Activated T-helper 1 cell treated with anti-CD3 and anti-CD28 coated beads, Interleukin-12 subunit alpha, Interleukin-12 subunit beta, Interleukin-2, Interleukin-4 antibody, amounts not matched to agents 30 ng/mL and 10 ng/mL and 1 ng/mL, durations not matched to agents 14 hours and 24 hours and 36 hours (primary cell): ENCODE measurements at regions of chr3 and their contacts with region 1.

Region 1: DNA sequence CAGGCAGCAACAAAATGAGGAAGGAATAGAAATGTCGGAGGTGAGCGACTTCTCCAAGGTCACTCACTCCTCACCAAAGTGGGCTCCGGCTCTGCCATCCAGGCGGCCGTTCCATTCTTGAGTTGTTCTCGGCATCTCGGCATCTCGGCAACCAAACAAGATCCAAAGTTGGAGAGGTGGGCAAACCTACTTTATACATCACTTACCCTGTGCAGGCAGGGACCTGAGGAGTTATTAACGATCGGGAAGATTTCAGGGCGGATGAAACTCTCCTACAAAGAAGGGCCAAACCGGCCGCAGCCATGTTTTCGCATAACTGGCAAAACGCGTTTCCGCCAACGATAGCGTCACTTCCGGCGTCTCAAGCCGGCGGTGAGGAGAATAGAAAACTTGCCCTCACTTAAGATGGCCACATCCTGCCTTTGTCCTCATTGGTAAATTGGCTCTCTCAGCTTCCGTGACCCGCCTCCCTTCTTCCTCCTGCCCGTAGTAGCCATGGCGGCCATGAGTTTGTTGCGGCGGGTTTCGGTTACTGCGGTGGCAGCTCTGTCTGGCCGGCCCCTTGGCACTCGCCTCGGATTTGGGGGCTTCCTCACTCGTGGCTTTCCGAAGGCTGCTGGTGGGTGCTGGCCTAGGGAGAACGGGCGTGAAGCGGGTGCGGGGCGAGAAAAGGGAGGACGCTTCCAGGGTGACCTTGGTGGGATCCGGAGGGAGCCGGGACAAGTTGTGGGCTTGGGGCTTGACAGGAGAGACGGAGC is at the starts of genes MRPL47 and NDUFB5:
- DNase-seq: peak; percentile 91
- H3K4me3 Mint-ChIP-seq: peak within 1 kb of the TSS; percentile 97
- H3K27ac Mint-ChIP-seq: peak within 1 kb of the TSS; percentile 99
- H3K4me1 Mint-ChIP-seq: peaks cover 36% of the 10 kb centered on the region
- H3K27me3 Mint-ChIP-seq: no peaks in the 10 kb centered on the region
- total RNA-seq, gene MRPL47: 65.1 and 65.5 TPM in 2 replicates
- total RNA-seq, gene NDUFB5: 81.5 and 86.1 TPM in 2 replicates

Region 2: DNA sequence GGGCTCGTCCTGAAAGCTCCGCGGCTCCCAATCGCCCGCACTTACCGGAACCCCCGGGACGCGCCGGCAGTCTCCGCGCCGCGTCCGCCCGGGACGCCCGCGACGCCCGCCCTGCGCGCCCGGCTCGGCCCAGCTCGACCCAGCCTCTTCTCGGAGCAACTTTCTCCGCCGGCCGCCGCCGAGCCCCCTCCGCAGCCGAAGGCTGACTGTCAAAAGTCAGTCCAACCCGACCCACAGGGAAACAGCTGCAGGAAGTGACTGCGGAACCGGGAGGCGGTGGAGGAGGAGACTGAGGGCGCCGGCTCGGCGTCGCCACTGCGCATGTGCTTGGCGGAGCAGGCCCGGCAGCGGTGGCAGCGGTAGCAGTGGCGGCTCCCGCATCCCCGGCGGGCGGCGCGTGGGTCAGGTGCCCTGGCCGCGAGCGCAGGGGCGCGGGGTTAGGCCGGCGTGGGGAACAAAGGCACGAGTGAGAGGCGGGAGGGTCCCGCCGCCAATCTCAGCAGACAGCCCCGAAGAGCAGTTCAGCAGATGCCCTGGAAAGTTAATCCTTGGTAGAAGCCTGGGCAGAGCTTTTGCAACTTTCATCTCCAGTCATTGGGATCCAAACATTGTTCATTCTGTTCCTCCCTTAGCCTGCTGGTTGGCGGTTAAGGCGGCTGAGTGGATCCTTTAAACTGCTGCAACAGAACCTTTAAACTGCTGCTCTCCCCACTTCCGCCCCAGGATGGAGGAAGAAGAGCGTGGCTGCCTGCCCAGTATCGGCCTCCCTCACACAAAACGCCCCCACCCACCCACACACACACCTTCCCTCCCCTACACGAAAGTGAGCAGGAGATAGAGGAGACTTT is 532.7 kb before region 1 on chr3 and contains the start of gene ZMAT3:
- intact Hi-C with region 1: loop called (anchors 2 kb)
- DNase-seq: peak; percentile 84
- H3K4me3 Mint-ChIP-seq: peak within 1 kb of the TSS; percentile 98
- H3K27ac Mint-ChIP-seq: peak within 1 kb of the TSS; percentile 95
- H3K4me1 Mint-ChIP-seq: peaks cover 43% of the 10 kb centered on the region
- H3K27me3 Mint-ChIP-seq: peaks cover 3% of the 10 kb centered on the region
- total RNA-seq, gene ZMAT3: 16.9 and 17.3 TPM in 2 replicates

Region 3: GRCh38 chr3:179347345-179348194 is 256.9 kb before region 1 on chr3 and contains the start of gene MFN1:
- intact Hi-C with region 1: loop called (anchors 1 kb)
- DNase-seq: peak; percentile 87
- H3K4me3 Mint-ChIP-seq: peak within 1 kb of the TSS; percentile 98
- H3K27ac Mint-ChIP-seq: peak within 1 kb of the TSS; percentile 96
- H3K4me1 Mint-ChIP-seq: peaks cover 25% of the 10 kb centered on the region
- H3K27me3 Mint-ChIP-seq: no peaks in the 10 kb centered on the region
- total RNA-seq, gene MFN1: 29.5 and 37.7 TPM in 2 replicates

Region 4: DNA sequence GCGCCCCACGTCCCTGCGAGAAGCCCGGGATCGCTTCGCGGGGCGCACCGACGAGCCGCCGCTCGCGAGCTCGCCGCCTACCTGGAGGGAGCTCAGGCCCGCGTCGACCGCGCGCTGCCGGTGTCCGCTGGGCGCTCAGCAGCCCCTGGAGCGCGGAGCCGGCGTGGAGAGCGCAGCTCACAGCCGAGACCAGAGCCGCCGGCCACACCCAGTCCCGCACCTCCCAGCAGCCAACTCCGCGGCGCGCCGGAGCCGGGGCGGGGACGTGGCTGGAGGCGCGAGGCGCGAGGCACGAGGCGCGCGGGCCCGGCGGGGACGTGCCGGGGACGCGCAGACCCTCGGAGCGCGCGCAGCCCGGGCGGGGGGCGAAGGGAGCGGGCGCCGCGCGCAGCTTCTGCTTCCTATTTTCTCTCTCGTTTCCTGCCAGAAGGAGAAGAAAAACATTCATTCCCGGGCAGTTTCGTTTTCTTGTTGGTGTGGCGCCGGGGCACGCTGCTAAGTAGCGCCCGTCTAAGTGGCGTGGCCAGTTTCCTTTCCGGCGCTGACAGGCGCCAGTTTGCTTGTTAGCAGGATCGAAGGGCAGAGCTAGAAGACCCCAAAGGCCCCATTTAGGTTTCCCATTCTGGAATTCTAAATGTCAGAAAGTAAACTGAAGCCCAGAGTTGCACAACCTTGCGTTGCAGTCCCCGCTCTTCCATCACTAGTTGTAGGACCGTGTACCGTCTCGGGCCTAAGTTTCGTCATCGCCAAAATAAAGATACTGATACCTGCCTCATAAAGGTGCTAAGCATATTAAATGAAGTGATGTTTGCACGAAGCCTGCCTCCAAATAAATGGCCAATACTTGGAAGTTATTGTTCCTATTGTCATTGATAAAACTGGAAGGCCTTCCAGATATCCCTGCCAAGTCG is 153.0 kb before region 1 on chr3 and contains the start of gene GNB4:
- intact Hi-C with region 1: loop called (anchors 2 kb)
- DNase-seq: peak; percentile 58
- H3K4me3 Mint-ChIP-seq: peak within 1 kb of the TSS; percentile 89
- H3K27ac Mint-ChIP-seq: peak within 1 kb of the TSS; percentile 91
- H3K4me1 Mint-ChIP-seq: peaks cover 39% of the 10 kb centered on the region
- H3K27me3 Mint-ChIP-seq: peaks cover 51% of the 10 kb centered on the region
- total RNA-seq, gene GNB4: 13.9 and 15.4 TPM in 2 replicates

Region 5: GRCh38 chr3:179589143-179589542 is 15.4 kb before region 1 on chr3:
- intact Hi-C with region 1: loop called (anchors 2 kb)
- DNase-seq: no peak
- H3K4me3 Mint-ChIP-seq: no peak overlapping the region
- H3K27ac Mint-ChIP-seq: peak overlapping the region; percentile 45
- H3K4me1 Mint-ChIP-seq: peaks cover 8% of the 10 kb centered on the region
- H3K27me3 Mint-ChIP-seq: no peaks in the 10 kb centered on the region

Region 6: DNA sequence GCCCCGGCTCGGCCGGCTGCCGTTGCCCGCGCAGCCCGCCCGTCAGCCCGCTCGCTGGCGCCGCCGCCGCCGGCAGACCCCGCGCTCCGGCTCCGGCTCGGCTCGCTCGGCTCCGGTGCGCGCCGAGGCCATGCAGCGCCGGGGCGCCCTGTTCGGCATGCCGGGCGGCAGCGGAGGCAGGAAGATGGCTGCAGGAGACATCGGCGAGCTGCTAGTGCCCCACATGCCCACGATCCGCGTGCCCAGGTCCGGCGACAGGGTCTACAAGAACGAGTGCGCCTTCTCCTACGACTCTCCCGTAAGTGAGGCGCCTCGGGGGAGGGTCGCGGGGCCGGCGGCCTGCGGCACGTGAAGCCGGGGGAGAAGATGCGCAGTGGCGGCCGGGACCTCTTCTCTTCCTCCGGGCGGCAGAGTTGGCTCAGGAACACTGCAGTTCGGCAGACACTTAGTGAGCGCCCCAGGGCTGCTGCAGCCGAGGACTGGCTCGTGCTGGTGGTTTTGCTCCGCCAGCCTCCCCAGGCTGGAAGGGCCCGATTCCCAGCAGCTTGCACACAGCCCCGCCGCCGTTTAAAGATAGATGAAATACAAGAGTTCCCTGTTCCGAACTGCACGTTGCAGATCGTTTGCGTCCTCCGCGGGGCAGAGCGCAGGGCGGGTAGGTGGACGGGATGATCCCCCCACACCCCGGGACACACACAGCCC is 48.7 kb after region 1 on chr3:
- intact Hi-C with region 1: loop called (anchors 1 kb)
- DNase-seq: peak; percentile 57
- H3K4me3 Mint-ChIP-seq: peak overlapping the region; percentile 93
- H3K27ac Mint-ChIP-seq: peak overlapping the region; percentile 87
- H3K4me1 Mint-ChIP-seq: peaks cover 27% of the 10 kb centered on the region
- H3K27me3 Mint-ChIP-seq: peaks cover 9% of the 10 kb centered on the region

Region 7: DNA sequence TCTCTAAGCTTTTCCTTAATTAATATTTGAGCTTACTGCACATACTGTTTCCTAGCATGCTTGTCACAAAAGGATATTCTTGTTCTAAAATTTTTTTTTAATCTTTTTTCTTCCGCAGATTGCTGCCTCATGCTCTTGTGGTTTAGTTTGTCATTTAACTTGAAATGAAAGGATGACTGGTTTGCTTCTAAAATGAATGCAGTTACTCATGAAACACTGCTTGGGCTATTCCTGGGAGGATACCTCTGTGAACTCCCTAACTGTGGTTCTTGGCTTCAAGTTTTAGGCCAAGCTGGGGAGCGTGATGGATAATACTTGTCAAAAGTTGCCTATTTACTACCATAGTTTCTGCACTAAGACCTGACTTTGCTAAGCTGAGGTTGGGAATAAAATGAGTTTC is 112.3 kb after region 1 on chr3:
- intact Hi-C with region 1: no loop called
- DNase-seq: no peak
- H3K4me3 Mint-ChIP-seq: no peak overlapping the region
- H3K27ac Mint-ChIP-seq: no peak overlapping the region
- H3K4me1 Mint-ChIP-seq: no peaks in the 10 kb centered on the region
- H3K27me3 Mint-ChIP-seq: no peaks in the 10 kb centered on the region